CD4-positive, alpha-beta memory T cell (primary cell): ENCODE measurements at regions of chr1 and their contacts with region 1.

Region 1: DNA sequence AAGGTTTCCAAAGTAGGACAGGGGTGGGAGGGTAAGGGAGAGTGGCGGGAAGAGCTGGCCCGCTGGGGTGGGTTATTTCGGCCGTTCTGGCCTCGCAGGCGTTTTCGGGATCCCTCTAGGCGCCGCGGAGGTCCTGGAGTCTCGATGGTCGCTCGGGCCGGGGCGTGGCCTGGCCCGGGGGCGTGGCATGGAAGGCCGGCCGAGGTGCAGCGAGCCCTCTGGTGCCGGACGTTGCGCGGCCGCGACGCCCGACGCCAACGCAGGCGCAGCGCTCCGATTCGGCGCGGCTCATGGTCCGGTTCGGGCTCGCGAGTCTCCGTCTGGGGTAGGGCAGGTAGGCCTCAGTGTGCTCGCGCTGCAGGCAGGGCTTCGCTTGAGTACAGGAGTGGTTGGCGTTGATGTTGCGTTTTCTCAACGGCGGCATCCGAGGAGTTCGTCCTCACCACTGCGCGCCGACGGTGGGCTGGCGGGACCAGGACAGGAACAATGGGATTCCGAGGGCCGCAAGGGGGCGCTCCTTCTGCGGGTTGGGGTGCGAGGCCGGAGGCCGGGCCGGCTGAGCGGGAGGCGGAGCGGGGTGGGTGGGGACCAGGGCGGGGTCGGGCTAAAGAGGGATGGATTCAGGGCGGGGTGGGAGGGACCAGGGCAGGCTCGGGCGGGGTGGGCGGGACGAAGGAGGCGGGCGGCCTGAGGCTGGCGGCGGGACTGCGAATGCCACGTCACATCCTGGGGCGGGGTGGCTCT is at the start of gene PGBD2:
- DNase-seq: peak; percentile 90 to 93 (median 92)
- H3K4me3 ChIP-seq: peak within 1 kb of the TSS; percentile 45 to 80
- H3K4me3 Mint-ChIP-seq: peak within 1 kb of the TSS; percentile 96 to 98 (median 98)
- H3K27ac ChIP-seq: peak within 1 kb of the TSS; percentile 77
- H3K27ac Mint-ChIP-seq: peak within 1 kb of the TSS; percentile 92 to 99 (median 99)
- H3K4me1 ChIP-seq: peaks cover 28% of the 10 kb centered on the region
- H3K4me1 Mint-ChIP-seq: peaks cover 26 to 59% (median 35%) of the 10 kb centered on the region in 4 donors
- H3K27me3 ChIP-seq: no peaks in the 10 kb centered on the region
- H3K27me3 Mint-ChIP-seq: peaks cover 0 to 2% of the 10 kb centered on the region in 2 donors
- total RNA-seq, gene PGBD2: 18.3 to 19.6 TPM

Region 2: DNA sequence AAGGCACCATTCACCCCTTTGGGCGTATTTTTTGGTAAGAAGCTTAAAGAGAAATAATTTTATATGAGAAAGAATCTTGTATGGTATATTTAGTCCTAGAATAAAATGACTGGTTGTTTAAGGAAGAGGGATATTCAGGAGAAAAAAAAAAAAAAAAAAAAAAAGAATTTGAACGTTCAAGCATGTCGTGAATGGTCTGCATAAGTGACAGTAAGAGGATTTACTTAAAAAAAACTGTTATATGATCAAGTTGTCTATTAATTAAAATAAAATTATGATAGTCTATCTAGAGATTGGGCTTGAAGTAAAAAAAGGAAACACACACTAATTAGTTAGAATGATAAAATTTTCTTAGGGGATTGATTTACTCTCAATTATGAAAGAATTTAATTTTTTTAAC is 191.9 kb before region 1 on chr1:
- CTCF ChIA-PET with region 1: no interaction called
- POLR2A ChIA-PET with region 1: no interaction called
- intact Hi-C with region 1: no loop called
- DNase-seq: no peak
- H3K4me3 ChIP-seq: no peak overlapping the region
- H3K4me3 Mint-ChIP-seq: no peak overlapping the region
- H3K27ac ChIP-seq: no peak overlapping the region
- H3K27ac Mint-ChIP-seq: no peak overlapping the region
- H3K4me1 ChIP-seq: no peaks in the 10 kb centered on the region
- H3K4me1 Mint-ChIP-seq: no peaks in the 10 kb centered on the region
- H3K27me3 ChIP-seq: no peaks in the 10 kb centered on the region
- H3K27me3 Mint-ChIP-seq: peaks cover 5 to 8% of the 10 kb centered on the region in 2 donors

Region 3: DNA sequence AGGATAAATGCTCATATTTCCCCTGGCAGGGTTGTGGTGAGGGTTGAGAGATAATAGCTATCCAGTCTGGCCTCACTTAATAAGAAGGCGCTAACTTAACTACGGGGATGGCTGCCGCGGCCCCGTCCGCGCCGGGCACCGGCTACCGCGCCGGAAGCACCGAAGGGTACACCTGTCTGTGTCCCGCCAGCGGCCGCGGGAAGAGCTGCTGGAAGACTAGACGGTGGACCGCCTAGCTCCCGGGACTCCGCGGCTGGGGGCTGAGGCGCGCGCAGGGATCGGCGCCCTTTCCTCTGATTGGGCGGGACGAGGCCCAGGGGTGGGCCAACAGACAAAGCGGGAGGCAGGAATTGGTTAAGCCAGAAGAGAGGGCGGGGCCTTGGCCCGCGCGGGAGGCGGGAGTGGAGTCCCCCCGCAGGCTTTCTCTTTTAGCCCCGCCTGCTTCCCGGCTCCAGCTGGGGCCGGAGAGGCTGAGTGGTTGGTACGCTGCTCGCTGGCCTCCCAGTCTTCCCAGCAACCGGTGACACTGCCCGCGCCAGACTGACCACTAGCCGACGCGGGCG is 68.3 kb before region 1 on chr1 and contains the start of gene ZNF672:
- CTCF ChIA-PET with region 1: interaction called, 3 read pairs
- POLR2A ChIA-PET with region 1: interaction called, 9 read pairs
- intact Hi-C with region 1: loop called (anchors 1 kb)
- DNase-seq: peak; percentile 92 to 95 (median 93)
- H3K4me3 ChIP-seq: peak within 1 kb of the TSS; percentile 64 to 87
- H3K4me3 Mint-ChIP-seq: peak within 1 kb of the TSS in 2 of 8 donors; percentile 95 to 99
- H3K27ac ChIP-seq: peak within 1 kb of the TSS; percentile 97
- H3K27ac Mint-ChIP-seq: peak within 1 kb of the TSS in 6 of 7 donors; percentile 96 to 99 (median 99)
- H3K4me1 ChIP-seq: peaks cover 36% of the 10 kb centered on the region
- H3K4me1 Mint-ChIP-seq: peaks cover 13 to 36% (median 24%) of the 10 kb centered on the region in 4 donors
- H3K27me3 ChIP-seq: no peaks in the 10 kb centered on the region
- H3K27me3 Mint-ChIP-seq: peaks cover 3 to 4% of the 10 kb centered on the region in 2 donors
- total RNA-seq, gene ZNF672: 39.7 to 42.8 TPM

Region 4: DNA sequence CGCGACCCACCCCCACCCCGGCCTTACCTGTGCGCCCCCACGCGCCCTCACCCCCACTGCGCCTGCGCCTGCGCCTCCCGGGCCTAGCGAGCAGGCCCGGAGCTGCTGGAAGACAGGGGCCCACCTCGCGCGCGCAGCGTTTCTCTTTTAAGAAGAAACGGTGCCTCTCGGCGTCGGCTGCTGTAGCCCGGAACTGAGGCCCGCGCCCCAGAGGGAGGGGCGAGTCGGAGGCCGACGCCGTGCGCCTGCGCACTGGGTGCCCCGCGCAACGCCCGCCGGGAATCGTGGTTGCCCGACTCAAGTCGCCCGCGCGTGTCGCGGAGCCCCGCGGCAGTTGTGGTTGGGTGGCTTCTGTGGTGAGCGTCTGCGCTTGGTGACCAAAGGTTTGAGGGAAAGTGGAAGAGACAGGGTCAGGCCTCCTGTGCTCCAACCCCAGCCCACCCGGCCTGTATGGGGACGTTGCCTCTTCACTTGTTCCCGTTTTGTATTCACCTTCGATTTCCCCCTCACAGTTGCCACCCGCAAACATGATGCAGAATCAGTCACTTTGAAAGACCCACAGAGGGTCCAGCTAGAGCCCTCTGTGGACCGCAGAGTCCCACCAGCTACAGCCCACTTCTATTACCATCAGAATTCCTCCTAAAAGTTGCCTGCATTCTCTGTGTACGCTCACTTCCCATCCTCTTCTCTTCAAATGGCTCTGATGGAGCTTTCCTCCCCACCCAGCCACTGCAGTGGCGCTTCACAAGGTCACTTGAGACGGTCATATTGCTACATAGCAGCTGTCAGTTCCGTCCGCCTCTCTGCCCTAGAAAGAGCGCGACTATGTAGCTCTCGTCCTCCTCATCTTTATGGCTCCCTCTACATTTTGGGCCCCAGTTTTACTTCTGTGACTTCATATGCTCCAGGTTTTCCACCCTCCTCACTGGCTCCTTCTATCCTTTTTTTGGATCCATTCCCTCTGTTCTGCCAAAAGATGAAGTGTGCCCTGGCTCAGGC is 47.0 kb before region 1 on chr1 and contains the start of gene ZNF692:
- CTCF ChIA-PET with region 1: interaction called, 5 read pairs
- POLR2A ChIA-PET with region 1: interaction called, 15 read pairs
- intact Hi-C with region 1: loop called (anchors 1 kb)
- DNase-seq: peak; percentile 97 to 98 (median 97)
- H3K4me3 ChIP-seq: peak within 1 kb of the TSS; percentile 66 to 81
- H3K4me3 Mint-ChIP-seq: peak within 1 kb of the TSS; percentile 84 to 93 (median 89)
- H3K27ac ChIP-seq: peak within 1 kb of the TSS; percentile 58
- H3K27ac Mint-ChIP-seq: peak within 1 kb of the TSS; percentile 88 to 98 (median 97)
- H3K4me1 ChIP-seq: peaks cover 58% of the 10 kb centered on the region
- H3K4me1 Mint-ChIP-seq: peaks cover 38 to 63% (median 45%) of the 10 kb centered on the region in 4 donors
- H3K27me3 ChIP-seq: no peaks in the 10 kb centered on the region
- H3K27me3 Mint-ChIP-seq: no peaks in the 10 kb centered on the region
- total RNA-seq, gene ZNF692: 70.8 to 74.8 TPM